A549 (cell line): ENCODE measurements at regions of chr20 and their contacts with region 1.

Region 1: DNA sequence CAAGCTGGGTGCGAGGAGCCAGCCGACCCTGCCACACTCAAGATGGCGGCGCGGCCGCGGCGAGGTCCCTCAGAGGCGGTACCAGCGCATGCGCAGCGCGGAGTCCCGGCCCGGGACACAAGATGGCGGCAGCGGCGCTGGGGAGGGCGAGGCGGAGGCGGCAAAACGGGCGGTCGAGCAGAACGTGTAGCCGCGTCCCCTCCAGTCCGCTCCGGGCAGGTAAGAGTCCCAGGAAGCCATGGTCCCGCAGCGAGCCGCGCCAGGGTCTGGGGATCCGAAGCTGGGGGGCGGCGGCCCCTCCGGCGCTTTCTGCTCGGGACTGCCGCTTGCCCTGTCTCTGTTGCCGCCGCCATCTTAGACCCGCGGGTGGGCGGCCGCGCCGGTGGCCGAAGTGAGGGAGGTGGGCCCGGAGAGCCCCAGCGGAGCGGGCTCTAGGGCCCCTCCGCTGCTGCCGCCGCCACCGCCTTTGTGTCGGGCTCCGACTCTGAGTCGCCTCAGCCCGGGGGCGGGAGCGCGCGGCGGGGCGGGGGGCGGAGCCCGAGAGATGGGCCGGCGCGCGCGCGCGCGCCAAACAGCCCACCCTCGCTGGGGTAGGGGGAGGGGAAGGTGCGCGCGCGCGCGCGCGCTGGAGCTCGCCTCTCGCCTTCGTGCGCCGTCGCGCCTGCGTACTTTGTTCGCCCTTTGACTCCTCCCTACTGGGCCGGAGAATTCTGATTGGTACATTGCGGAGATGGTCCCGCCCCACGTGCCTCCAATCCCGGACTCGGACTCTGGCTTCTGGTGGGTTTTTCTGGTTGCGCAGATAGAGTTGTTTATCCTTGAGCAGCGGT is at the start of gene PCIF1:
- DNase-seq: peak; percentile 96 to 99
- ATAC-seq: peak; percentile 80 to 85
- H3K4me3 ChIP-seq: peak within 1 kb of the TSS; percentile 78
- H3K27ac ChIP-seq: peak within 1 kb of the TSS; percentile 98 to 99
- H3K4me1 ChIP-seq: peaks cover 16% of the 10 kb centered on the region
- CTCF ChIP-seq: no peak
- EP300 ChIP-seq: 0 out of 5 replicates have a peak, but pooled peaks of 1 of the 2 experiments have one; percentile 7
- POLR2A ChIP-seq: peak; percentile 93
- RAD21 ChIP-seq: no peak
- polyA plus RNA-seq, gene PCIF1: 19.7 and 24.3 TPM in 2 replicates

Region 2: DNA sequence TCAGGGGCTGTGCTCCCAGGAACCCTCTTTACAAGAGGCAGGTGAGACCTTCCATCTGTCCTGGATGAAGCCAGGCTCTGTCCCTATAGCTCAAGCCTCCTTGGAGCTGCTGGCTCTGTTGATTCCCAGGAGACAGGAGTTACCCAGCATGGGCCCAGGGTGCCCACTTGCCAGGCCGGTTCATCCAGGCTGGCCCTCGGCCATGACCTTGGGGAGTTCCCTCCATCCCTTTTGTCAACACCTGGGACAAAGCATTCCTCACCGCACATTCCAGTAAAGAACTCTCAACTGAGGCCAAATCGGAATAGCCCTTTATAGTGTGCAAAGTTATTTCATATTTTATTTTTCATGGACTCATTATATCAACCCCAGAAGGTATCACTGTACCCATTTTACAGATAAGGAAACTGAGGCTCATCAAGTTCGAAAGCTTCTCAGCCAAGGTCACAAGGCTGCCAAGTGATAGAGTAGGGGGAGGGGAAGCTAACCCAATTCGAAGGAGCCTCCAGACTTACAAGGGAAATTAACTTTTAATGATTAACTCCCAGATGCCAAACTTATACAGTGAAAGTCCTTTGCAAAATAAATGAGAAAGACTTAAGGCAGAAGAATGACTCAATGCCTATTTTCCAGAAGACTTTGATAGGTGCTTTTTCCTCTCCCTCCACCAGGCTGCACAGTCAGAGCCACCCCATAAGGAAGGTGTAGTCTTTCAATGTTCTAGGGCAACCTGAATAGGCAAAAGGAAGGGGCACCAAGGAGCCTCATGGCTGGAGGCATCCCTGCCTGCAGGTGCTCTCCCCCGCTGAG is 605.1 kb before region 1 on chr20:
- CTCF ChIA-PET with region 1: no interaction called
- POLR2A ChIA-PET with region 1: no interaction called
- DNase-seq: no peak
- ATAC-seq: peak; percentile 36 to 44; a peak in 2 of 6 replicates
- H3K4me3 ChIP-seq: no peak overlapping the region
- H3K27ac ChIP-seq: no peak overlapping the region
- H3K4me1 ChIP-seq: 0 out of 3 replicates have a peak, but pooled peaks cover 4% of the 10 kb centered on the region
- CTCF ChIP-seq: no peak
- EP300 ChIP-seq: no peak
- POLR2A ChIP-seq: no peak
- RAD21 ChIP-seq: no peak

Region 3: GRCh38 chr20:45890985-45891983 is 43.5 kb before region 1 on chr20 and contains the starts of genes CTSA and NEURL2:
- CTCF ChIA-PET with region 1: interaction called, 5 read pairs
- POLR2A ChIA-PET with region 1: interaction called, 19 read pairs
- DNase-seq: peak; percentile 95 to 99
- ATAC-seq: peak; percentile 81 to 89
- H3K4me3 ChIP-seq: peak within 1 kb of the TSS; percentile 96
- H3K27ac ChIP-seq: peak within 1 kb of the TSS; percentile 90 to 99
- H3K4me1 ChIP-seq: peaks cover 14% of the 10 kb centered on the region
- CTCF ChIP-seq: no peak
- EP300 ChIP-seq: no peak
- POLR2A ChIP-seq: no peak; the same call in 1 of the 2 replicates
- RAD21 ChIP-seq: 0 out of 5 replicates have a peak, but pooled peaks of 1 of the 2 experiments have one; percentile 18
- polyA plus RNA-seq, gene CTSA: 53.1 and 61.2 TPM in 2 replicates
- polyA plus RNA-seq, gene NEURL2: 0.56 and 0.57 TPM in 2 replicates

Region 4: DNA sequence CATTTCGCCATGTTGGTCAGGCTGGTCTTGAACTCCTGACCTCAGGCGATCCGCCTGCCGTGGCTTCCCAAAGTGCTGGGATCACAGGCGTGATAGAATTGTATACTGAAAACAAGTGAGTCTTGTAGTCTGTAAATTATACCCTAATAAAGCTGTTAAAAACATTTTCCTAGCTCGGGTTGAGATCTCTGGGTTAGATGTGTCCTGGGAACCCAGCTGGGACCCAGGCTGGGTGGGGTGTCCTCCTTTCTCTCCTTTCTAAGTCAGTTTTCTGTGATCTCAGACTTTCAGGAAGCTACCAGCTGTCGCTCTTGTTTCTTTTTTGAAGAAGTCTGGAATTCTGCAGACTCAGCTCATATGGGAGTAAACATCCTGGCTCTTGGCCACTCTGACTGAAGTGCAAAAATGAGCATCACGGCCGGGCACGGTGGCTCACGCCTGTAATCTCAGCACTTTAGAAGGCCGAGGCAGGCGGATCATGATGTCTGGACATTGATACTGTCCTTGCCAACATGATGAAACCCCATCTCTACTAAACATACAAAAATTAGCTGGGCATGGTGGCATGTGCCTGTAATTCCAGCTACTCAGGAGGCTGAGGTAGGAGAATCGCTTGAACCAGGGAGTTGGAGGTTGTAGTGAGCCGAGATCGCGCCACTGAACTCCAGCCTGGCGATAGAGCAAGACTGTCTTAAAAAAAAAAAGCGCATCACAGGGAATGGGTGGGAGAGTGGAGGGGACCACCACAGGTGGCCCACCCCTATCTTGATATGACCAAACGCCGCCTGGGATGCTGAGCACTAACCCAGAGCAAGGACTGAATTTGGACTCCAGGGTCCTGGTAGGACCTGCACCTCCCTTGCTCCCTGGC is 10.2 kb before region 1 on chr20:
- CTCF ChIA-PET with region 1: interaction called, 10 read pairs
- POLR2A ChIA-PET with region 1: interaction called, 30 read pairs
- DNase-seq: no peak
- ATAC-seq: no peak
- H3K4me3 ChIP-seq: no peak overlapping the region
- H3K27ac ChIP-seq: no peak overlapping the region
- H3K4me1 ChIP-seq: no peaks in the 10 kb centered on the region
- CTCF ChIP-seq: no peak
- EP300 ChIP-seq: no peak
- POLR2A ChIP-seq: no peak
- RAD21 ChIP-seq: no peak

Region 5: GRCh38 chr20:45963059-45964005 is 28.5 kb after region 1 on chr20:
- CTCF ChIA-PET with region 1: interaction called, 18 read pairs
- POLR2A ChIA-PET with region 1: interaction called, 6 read pairs
- DNase-seq: peak; percentile 28 to 68
- ATAC-seq: peak; percentile 77 to 79
- H3K4me3 ChIP-seq: no peak overlapping the region
- H3K27ac ChIP-seq: no peak overlapping the region
- H3K4me1 ChIP-seq: no peaks in the 10 kb centered on the region
- CTCF ChIP-seq: peak; percentile 40; the same call in 2 of the 3 replicates
- EP300 ChIP-seq: no peak
- POLR2A ChIP-seq: no peak
- RAD21 ChIP-seq: peak; percentile 57 to 60; a peak in 4 of 5 replicates